ENCODE measurements at regions of chr9 and their contacts with region 1.

Region 1: DNA sequence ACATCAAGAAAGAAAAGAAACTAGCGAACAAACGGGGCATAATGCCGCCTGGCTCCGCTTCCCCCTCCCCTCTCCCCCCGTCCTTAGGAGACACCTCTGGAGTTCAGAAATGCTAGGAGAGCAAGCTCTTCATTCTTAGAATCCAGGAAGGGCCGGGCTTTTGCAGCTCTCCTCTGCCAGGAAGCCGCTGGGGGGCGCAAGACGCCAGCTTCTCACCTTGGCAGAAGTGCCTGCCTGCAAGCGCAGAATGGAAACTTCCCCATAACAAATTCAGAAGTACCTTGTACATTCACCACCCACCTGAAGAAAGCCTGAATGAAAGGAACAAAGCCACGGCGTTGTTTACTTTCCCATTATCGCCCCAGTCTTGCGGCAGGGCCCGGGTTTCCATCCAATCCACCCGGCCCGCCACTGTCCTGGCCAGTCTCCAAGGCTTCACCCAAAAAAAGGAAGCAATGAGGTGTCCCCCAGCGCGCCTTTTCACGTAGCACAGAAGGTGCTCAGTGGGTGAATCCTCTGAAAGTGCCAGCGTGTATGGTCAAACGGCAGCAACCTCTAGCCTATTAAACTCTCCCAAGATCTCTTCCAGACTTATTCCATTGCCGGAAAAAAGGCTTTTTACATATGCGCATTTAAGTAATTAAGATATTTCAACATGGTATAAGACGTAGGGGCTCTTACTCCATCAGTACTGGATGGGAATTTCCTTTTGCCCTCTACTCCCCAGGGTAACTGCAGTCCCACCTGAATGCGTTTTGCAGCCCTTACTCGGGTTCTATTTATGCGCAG is 1.6 kb upstream of the GADD45G start:
- DNase-seq: peak; percentile 93 to 94 (median 94)
- ATAC-seq: peak; percentile 34 to 51 (median 48)
- H3K4me3 ChIP-seq: peak overlapping the region; percentile 72 to 92 (median 84)
- H3K27ac ChIP-seq: peak overlapping the region in 2 of 3 donors; percentile 87
- H3K4me1 ChIP-seq: peaks cover 0 to 25% (median 9%) of the 10 kb centered on the region in 4 donors
- H3K27me3 ChIP-seq: no peaks in the 10 kb centered on the region
- CTCF ChIP-seq: peak; percentile 86 to 88 (median 88)
- POLR2A ChIP-seq: no peak

Region 2: DNA sequence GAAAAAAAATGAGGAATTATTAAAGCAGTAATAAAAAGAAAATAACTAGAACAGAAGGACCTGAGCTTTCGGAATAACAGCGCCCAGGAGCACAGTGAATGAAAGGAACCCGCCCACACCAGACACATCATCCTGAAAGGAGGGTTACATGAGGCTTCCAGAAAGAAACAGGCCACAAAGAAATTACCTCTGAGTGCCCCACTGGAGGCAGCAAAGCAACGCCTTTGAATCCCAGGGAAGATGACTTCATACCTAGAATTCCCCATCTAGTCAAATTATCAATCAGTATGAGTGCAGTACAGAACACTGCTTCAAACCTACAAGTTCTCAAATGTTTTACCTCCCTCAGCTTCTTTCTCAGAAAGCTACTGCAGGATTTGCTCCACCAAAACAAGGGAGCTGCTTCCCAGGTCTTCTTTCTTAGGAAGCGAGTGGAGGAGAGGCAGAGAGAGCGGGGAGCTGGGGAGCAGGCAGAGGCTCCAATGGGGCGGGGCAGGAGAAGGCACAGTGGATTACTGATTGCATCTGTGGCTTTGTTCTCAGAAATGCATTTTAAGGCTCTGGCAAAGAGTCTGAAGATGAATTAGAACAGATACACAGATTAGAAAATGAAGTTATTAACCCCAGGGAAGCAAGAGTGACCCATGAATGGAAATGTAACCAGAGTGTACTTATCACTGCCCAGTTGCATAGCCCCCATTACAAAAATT is 192.4 kb before region 1 on chr9:
- intact Hi-C with region 1: no loop called
- DNase-seq: no peak
- ATAC-seq: peak in 1 of 4 donors; percentile 33
- H3K4me3 ChIP-seq: no peak overlapping the region
- H3K27ac ChIP-seq: no peak overlapping the region
- H3K4me1 ChIP-seq: no peaks in the 10 kb centered on the region
- H3K27me3 ChIP-seq: no peaks in the 10 kb centered on the region
- CTCF ChIP-seq: no peak
- POLR2A ChIP-seq: no peak

Region 3: DNA sequence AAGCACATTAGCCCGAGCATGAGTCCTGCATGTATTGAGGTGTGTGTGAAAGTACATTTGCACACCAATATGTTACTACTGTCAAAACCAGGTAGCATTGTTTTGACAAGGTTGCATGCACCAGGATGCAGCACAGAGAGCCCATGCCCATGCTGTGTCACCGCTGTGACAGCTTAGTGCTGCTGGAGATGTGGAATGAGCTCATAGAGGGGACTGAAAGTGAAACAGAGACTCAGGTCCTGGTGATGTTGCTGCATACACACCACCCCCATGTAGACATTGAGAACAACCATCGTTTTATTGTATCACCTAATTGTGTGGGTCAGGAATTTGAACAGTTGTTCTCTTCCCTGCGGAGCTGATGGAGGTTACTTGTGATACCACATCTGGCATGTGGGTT is 54.6 kb after region 1 on chr9:
- intact Hi-C with region 1: loop called in 1 of 2 experiments (anchors 10 kb)
- DNase-seq: no peak
- ATAC-seq: no peak
- H3K4me3 ChIP-seq: no peak overlapping the region
- H3K27ac ChIP-seq: no peak overlapping the region
- H3K4me1 ChIP-seq: peaks cover 4 to 50% (median 27%) of the 10 kb centered on the region in 4 donors
- H3K27me3 ChIP-seq: no peaks in the 10 kb centered on the region
- CTCF ChIP-seq: no peak
- POLR2A ChIP-seq: no peak

Region 4: GRCh38 chr9:89668216-89668865 is 65.2 kb after region 1 on chr9:
- intact Hi-C with region 1: no loop called
- DNase-seq: no peak
- ATAC-seq: peak in 2 of 4 donors; percentile 2 to 11
- H3K4me3 ChIP-seq: no peak overlapping the region
- H3K27ac ChIP-seq: peak overlapping the region; percentile 52 to 96 (median 92)
- H3K4me1 ChIP-seq: peaks cover 3 to 74% (median 38%) of the 10 kb centered on the region in 4 donors
- H3K27me3 ChIP-seq: no peaks in the 10 kb centered on the region
- CTCF ChIP-seq: no peak
- POLR2A ChIP-seq: no peak

Region 5: DNA sequence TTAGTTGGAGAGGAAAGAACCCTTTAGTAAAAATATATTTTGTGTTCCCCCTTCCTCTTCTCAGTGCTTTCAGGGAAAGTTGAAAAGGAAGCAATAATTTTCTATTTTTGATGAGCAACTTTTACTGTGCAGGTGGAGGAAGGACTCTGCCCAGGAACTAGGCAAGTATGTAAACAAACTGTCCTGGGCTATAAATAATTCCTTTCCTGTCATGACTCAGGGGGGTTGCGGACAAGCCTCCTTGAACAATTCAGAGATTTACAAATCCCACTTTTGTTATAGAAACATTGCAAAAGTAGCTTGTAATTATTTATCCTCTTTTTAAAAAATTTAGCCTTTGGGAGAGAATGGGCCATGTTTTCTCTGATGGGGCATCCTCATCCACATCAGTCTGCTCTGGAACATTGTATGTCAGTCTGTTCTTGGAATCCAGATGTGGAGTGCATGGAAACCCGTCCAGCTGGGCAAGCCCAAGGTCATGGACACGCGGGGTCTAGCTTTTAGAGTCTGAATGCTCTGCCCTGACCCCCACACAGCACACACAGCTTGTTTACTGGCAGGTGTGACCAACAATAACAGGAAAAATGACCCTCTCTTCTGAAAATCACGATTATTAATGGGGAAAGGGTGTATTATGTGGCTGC is 129.2 kb after region 1 on chr9:
- intact Hi-C with region 1: loop called in 1 of 2 experiments (anchors 10 kb)
- DNase-seq: no peak
- ATAC-seq: peak; percentile 34 to 52 (median 40)
- H3K4me3 ChIP-seq: no peak overlapping the region
- H3K27ac ChIP-seq: peak overlapping the region; percentile 57 to 73 (median 65)
- H3K4me1 ChIP-seq: peaks cover 7 to 46% (median 19%) of the 10 kb centered on the region in 4 donors
- H3K27me3 ChIP-seq: no peaks in the 10 kb centered on the region
- CTCF ChIP-seq: no peak
- POLR2A ChIP-seq: no peak

Region 6: GRCh38 chr9:89920951-89921350 is 317.8 kb after region 1 on chr9:
- intact Hi-C with region 1: loop called (anchors 2 to 10 kb)
- DNase-seq: no peak
- ATAC-seq: no peak
- H3K4me3 ChIP-seq: no peak overlapping the region
- H3K27ac ChIP-seq: no peak overlapping the region
- H3K4me1 ChIP-seq: peaks cover 0 to 14% (median 3%) of the 10 kb centered on the region in 4 donors
- H3K27me3 ChIP-seq: no peaks in the 10 kb centered on the region
- CTCF ChIP-seq: no peak
- POLR2A ChIP-seq: no peak

Region 7: DNA sequence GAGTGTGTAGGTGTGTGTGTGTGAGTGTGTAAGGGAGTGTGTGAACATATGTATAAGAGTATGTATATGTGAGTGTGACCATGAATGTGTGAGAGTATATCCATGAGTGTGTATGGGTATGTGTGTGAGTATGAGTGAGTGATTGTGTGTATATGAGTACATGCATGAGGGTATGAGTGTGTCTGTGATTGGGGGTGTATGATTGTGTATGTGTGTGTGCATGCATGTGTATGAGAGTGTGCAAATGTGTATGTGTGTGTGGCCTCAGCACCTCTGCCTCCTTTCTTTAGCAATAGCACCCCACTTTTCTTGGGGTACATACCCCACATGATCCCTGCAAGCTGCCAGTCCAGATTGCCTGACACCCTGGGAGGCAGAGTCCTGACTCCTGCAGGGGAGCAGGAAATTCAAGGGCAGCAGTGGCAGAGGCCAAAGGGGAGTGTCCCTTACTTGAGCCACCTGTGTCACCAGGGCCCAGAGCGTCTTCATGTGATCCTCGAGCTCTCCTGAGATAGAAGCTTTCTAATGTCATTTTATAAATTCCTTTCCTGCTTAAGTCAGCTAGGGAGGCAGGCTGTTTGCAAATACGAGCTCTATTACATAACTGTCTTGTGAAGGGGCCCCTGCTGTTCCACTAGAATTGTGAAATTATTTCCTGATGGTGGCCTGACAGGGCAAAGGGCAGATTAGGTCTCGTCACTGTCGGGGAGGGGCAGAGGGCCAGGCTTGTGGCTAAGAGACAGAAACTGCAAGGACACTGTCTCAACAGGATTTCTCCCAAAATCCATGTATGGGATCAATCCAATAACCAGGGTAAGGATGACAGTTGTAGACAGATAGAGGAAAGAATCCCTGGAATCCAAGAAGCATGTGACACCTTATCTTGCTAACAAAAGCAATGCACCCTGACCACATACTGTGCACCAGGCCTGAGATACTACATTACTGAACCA is 390.8 kb after region 1 on chr9:
- intact Hi-C with region 1: loop called in 1 of 2 experiments (anchors 5 kb)
- DNase-seq: peak; percentile 83 to 93 (median 91)
- ATAC-seq: peak; percentile 54 to 80 (median 60)
- H3K4me3 ChIP-seq: no peak overlapping the region
- H3K27ac ChIP-seq: peak overlapping the region; percentile 90 to 99 (median 98)
- H3K4me1 ChIP-seq: peaks cover 0 to 70% (median 27%) of the 10 kb centered on the region in 4 donors
- H3K27me3 ChIP-seq: no peaks in the 10 kb centered on the region
- CTCF ChIP-seq: no peak
- POLR2A ChIP-seq: no peak

Region 8: GRCh38 chr9:90102292-90102901 is 499.2 kb after region 1 on chr9:
- intact Hi-C with region 1: loop called (anchors 5 kb)
- DNase-seq: peak; percentile 81 to 86 (median 85)
- ATAC-seq: peak; percentile 86 to 96 (median 95)
- H3K4me3 ChIP-seq: no peak overlapping the region
- H3K27ac ChIP-seq: no peak overlapping the region
- H3K4me1 ChIP-seq: peaks cover 0 to 3% (median 0%) of the 10 kb centered on the region in 4 donors
- H3K27me3 ChIP-seq: no peaks in the 10 kb centered on the region
- CTCF ChIP-seq: peak; percentile 80 to 93 (median 86)
- POLR2A ChIP-seq: no peak

Measured in right lobe of liver (tissue), 6 donors.